Caco-2 (cell line): ENCODE measurements at regions of chr11 and their contacts with region 1.

Region 1: DNA sequence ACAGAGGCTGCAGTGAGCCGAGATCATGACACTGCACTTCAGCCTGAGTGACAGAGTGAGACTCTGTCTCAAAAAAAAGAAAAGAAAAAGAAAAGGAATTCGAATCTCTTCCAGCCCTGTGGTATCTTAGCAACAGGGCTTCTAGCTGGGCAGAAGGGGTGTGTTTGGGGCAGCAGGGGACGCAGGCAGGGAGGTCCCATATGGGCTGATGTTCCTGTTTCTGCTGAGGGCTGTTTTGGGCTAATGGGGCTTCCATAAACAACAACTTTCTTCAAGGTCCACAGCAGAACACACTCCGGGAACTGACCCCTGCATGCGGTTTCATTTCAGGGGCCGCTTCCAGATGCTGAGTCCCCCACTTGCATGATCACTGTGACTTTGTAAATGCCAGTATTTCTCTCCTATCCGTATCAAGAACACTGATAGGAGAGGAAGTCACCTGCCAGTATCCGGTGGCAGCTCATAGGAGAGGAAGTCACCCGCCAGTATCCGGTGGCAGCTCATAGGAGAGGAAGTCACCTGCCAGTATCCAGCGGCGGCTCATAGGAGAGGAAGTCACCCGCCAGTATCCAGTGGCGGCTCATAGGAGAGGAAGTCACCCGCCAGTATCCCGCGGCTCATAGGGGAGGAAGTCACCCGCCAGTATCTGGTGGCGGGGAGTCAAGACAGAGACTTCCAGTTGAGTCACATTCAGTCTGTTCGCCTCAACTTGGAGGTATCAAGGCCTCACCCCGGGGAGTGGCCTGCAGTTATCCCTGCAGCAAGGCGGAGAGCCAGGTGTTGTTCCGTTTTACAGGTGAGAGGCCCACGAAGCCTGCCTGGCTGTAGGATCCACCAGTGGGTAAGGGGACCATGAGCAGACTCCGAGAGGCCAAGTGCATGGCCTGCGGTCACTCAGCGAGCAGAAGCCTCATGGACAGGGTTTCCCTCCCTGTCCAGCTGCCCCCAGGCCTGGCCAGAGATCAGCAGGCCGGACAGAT is 8.3 kb upstream of the FGF19 start:
- DNase-seq: no peak
- H3K4me3 ChIP-seq: no peak overlapping the region
- H3K4me3 Mint-ChIP-seq: no peak overlapping the region
- H3K27ac Mint-ChIP-seq: no peak overlapping the region
- H3K4me1 ChIP-seq: peaks cover 13% of the 10 kb centered on the region
- H3K4me1 Mint-ChIP-seq: peaks cover 7% of the 10 kb centered on the region
- H3K27me3 ChIP-seq: no peaks in the 10 kb centered on the region
- H3K27me3 Mint-ChIP-seq: no peaks in the 10 kb centered on the region
- CTCF ChIP-seq: no peak

Region 2: DNA sequence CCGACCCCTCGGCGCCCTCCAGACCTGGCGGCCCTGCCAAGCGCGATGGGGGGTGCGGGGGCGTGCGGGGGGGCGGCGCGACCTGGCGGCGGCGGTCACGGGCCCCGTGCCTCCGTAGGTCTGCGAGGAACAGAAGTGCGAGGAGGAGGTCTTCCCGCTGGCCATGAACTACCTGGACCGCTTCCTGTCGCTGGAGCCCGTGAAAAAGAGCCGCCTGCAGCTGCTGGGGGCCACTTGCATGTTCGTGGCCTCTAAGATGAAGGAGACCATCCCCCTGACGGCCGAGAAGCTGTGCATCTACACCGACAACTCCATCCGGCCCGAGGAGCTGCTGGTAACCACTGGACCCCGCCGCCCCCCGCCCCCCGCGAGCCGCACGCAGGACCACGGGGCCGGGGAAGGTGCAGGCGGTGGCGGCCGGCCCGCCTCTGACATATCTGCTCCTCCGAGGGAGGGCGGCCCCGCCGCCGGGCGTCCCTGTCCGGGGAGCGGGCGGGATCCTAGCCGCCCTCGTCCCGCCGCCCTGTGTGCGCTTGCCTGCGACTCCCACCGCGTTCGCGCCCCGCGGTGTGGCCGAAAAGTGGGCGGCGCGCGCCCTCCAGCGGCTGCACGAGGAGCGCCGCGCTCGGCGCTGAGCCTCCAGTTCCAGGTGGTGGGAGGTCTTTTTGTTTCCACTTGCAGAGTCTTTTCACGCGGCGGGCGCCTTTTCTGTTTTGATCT is 69.0 kb before region 1 on chr11:
- CTCF ChIA-PET with region 1: no interaction called
- POLR2A ChIA-PET with region 1: no interaction called
- intact Hi-C with region 1: no loop called
- DNase-seq: peak; percentile 85 to 95
- H3K4me3 ChIP-seq: peak overlapping the region; percentile 73
- H3K4me3 Mint-ChIP-seq: peak overlapping the region; percentile 96
- H3K27ac Mint-ChIP-seq: peak overlapping the region; percentile 45
- H3K4me1 ChIP-seq: peaks cover 10% of the 10 kb centered on the region
- H3K4me1 Mint-ChIP-seq: peaks cover 13% of the 10 kb centered on the region
- H3K27me3 ChIP-seq: no peaks in the 10 kb centered on the region
- H3K27me3 Mint-ChIP-seq: no peaks in the 10 kb centered on the region
- CTCF ChIP-seq: peak; percentile 96 to 99

Region 3: DNA sequence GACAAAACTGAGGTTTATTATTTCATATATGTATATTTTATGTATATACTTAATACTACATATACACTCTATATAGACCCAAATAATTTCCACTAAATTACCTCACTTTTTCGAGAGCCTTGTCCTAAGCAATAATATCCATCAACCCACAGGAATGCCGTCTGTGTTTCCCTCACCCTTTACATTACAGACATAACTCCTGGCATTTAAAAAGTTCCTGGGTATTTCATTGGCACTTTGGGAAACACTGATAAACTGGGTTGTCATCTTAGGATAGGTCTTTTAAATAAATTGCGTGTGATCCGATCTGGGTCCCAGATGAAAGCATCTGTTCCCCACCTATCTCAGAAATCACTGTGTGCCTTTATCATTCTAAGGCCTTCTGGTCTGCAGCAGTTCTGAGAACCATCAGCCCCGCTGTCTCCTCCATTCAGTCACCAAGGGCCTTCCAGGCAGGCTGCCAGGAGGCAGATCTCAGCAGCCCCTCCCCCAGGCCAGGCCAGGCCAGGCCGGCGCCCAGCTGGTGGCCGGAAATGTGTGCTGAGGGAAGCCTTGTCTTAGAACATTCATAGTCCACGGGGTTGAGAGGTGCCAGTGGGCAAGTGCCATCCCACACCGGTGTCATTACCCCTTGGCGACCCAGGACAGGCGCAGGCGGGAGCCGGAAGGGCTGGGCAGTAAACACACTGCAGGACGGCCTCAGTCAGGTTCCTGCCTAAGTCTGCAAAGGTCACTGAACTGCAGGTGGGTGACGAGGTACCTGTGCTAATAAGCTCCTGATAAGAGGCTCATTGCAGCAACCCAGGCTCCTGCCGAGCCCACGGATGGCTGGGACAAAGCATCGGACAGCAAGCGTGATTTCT is 11.6 kb before region 1 on chr11:
- CTCF ChIA-PET with region 1: interaction called, 11 read pairs
- POLR2A ChIA-PET with region 1: no interaction called
- intact Hi-C with region 1: loop called (anchors 1 kb)
- DNase-seq: peak; percentile 60 to 72
- H3K4me3 ChIP-seq: no peak overlapping the region
- H3K4me3 Mint-ChIP-seq: peak overlapping the region; percentile 15
- H3K27ac Mint-ChIP-seq: peak overlapping the region; percentile 36
- H3K4me1 ChIP-seq: peaks cover 18% of the 10 kb centered on the region
- H3K4me1 Mint-ChIP-seq: peaks cover 15% of the 10 kb centered on the region
- H3K27me3 ChIP-seq: no peaks in the 10 kb centered on the region
- H3K27me3 Mint-ChIP-seq: no peaks in the 10 kb centered on the region
- CTCF ChIP-seq: no peak

Region 4: GRCh38 chr11:69881449-69882269 is 169.5 kb after region 1 on chr11:
- CTCF ChIA-PET with region 1: interaction called, 4 read pairs
- POLR2A ChIA-PET with region 1: no interaction called
- intact Hi-C with region 1: loop called (anchors 2 kb)
- DNase-seq: peak in 1 of 2 experiments; percentile 40
- H3K4me3 ChIP-seq: no peak overlapping the region
- H3K4me3 Mint-ChIP-seq: no peak overlapping the region
- H3K27ac Mint-ChIP-seq: no peak overlapping the region
- H3K4me1 ChIP-seq: no peaks in the 10 kb centered on the region
- H3K4me1 Mint-ChIP-seq: no peaks in the 10 kb centered on the region
- H3K27me3 ChIP-seq: 0 out of 2 replicates have a peak, but pooled peaks cover 2% of the 10 kb centered on the region
- H3K27me3 Mint-ChIP-seq: no peaks in the 10 kb centered on the region
- CTCF ChIP-seq: peak in 1 of 2 experiments; percentile 27